Caco-2 (cell line): ENCODE measurements at regions of chr7 and their contacts with region 1.

Region 1: GRCh38 chr7:100896732-100897608 is 1.3 kb upstream of the ACHE start:
- DNase-seq: peak in 1 of 2 experiments; percentile 70
- H3K4me3 ChIP-seq: peak overlapping the region; percentile 50
- H3K4me3 Mint-ChIP-seq: peak overlapping the region; percentile 100
- H3K27ac Mint-ChIP-seq: peak overlapping the region; percentile 86
- H3K4me1 ChIP-seq: peaks cover 31% of the 10 kb centered on the region
- H3K4me1 Mint-ChIP-seq: peaks cover 32% of the 10 kb centered on the region
- H3K27me3 ChIP-seq: no peaks in the 10 kb centered on the region
- H3K27me3 Mint-ChIP-seq: no peaks in the 10 kb centered on the region
- CTCF ChIP-seq: peak; percentile 84 to 85

Region 2: DNA sequence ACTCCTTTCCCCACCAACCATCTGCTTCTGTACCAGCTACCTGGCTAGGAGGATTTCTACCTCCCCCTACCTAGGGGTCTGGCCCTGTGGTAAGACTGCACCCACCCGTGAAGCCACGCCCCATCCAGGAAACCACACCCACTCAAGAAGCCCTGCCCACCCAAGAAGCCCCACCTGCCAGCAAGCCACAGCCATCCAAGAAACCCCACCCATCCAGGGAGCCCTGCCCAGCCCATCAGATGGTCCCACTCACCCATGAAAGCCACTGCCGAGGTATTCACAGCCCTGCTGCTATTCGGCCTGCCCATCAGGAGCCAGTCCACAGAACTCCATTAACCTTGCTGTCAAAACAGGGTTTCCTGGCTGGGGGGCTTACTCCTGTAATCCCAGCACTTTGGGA is 36.8 kb after region 1 on chr7:
- CTCF ChIA-PET with region 1: no interaction called
- POLR2A ChIA-PET with region 1: no interaction called
- intact Hi-C with region 1: loop called (anchors 2 kb)
- DNase-seq: peak in 1 of 2 experiments; percentile 44
- H3K4me3 ChIP-seq: no peak overlapping the region
- H3K4me3 Mint-ChIP-seq: no peak overlapping the region
- H3K27ac Mint-ChIP-seq: peak overlapping the region; percentile 39
- H3K4me1 ChIP-seq: peaks cover 37% of the 10 kb centered on the region
- H3K4me1 Mint-ChIP-seq: peaks cover 19% of the 10 kb centered on the region
- H3K27me3 ChIP-seq: no peaks in the 10 kb centered on the region
- H3K27me3 Mint-ChIP-seq: no peaks in the 10 kb centered on the region
- CTCF ChIP-seq: no peak

Region 3: GRCh38 chr7:100942045-100942768 is 45.2 kb after region 1 on chr7:
- CTCF ChIA-PET with region 1: interaction called, 3 read pairs
- POLR2A ChIA-PET with region 1: no interaction called
- intact Hi-C with region 1: loop called (anchors 2 kb)
- DNase-seq: peak; percentile 68 to 71
- H3K4me3 ChIP-seq: no peak overlapping the region
- H3K4me3 Mint-ChIP-seq: peak overlapping the region; percentile 21
- H3K27ac Mint-ChIP-seq: peak overlapping the region; percentile 2
- H3K4me1 ChIP-seq: peaks cover 13% of the 10 kb centered on the region
- H3K4me1 Mint-ChIP-seq: peaks cover 11% of the 10 kb centered on the region
- H3K27me3 ChIP-seq: no peaks in the 10 kb centered on the region
- H3K27me3 Mint-ChIP-seq: no peaks in the 10 kb centered on the region
- CTCF ChIP-seq: no peak

Region 4: GRCh38 chr7:101059627-101059942 is 162.6 kb after region 1 on chr7:
- CTCF ChIA-PET with region 1: interaction called, 3 read pairs
- POLR2A ChIA-PET with region 1: interaction called, 8 read pairs
- intact Hi-C with region 1: loop called (anchors 1 kb)
- DNase-seq: no peak
- H3K4me3 ChIP-seq: no peak overlapping the region
- H3K4me3 Mint-ChIP-seq: no peak overlapping the region
- H3K27ac Mint-ChIP-seq: no peak overlapping the region
- H3K4me1 ChIP-seq: no peaks in the 10 kb centered on the region
- H3K4me1 Mint-ChIP-seq: no peaks in the 10 kb centered on the region
- H3K27me3 ChIP-seq: no peaks in the 10 kb centered on the region; the same call in 1 of the 2 replicates
- H3K27me3 Mint-ChIP-seq: peaks cover 24% of the 10 kb centered on the region
- CTCF ChIP-seq: no peak